ENCODE measurements at regions of chr14 and their contacts with region 1.

Region 1: DNA sequence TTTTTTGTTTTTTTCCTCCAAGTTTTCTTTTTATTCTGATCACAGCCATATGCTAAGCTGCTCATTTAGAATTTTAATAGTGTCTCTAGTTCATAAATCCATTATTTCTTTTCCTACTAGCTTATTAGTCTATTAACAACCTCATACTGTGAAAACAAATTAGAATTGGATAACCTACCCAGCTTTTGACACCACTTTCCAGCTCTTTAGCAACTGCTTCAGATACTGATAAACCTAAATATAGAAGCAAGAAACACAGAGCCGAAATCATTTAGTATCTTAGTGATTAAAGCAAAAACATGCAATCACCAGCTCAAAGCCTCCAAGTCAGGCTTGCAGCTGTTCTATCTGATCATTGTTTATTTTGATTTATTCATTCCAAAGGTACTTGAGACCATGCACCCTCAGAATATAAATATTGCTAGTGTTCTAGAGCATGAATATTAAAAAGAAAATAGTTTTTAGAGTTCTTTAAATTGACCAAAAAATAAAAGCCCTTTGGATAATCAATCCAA is 121.5 kb downstream of the STXBP6 start:
- DNase-seq: no peak
- H3K4me3 ChIP-seq: no peak overlapping the region
- H3K27ac ChIP-seq: no peak overlapping the region
- H3K4me1 ChIP-seq: no peaks in the 10 kb centered on the region
- H3K27me3 ChIP-seq: no peaks in the 10 kb centered on the region
- CTCF ChIP-seq: no peak

Region 2: GRCh38 chr14:24761141-24761540 is 167.3 kb before region 1 on chr14:
- CTCF ChIA-PET with region 1: interaction called, 11 read pairs
- POLR2A ChIA-PET with region 1: no interaction called
- intact Hi-C with region 1: no loop called
- DNase-seq: no peak
- H3K4me3 ChIP-seq: no peak overlapping the region
- H3K27ac ChIP-seq: no peak overlapping the region
- H3K4me1 ChIP-seq: no peaks in the 10 kb centered on the region
- H3K27me3 ChIP-seq: peaks cover 6% of the 10 kb centered on the region
- CTCF ChIP-seq: no peak

Measured in A673 (cell line).